ENCODE measurements at regions of chr2 and their contacts with region 1.

Region 1: DNA sequence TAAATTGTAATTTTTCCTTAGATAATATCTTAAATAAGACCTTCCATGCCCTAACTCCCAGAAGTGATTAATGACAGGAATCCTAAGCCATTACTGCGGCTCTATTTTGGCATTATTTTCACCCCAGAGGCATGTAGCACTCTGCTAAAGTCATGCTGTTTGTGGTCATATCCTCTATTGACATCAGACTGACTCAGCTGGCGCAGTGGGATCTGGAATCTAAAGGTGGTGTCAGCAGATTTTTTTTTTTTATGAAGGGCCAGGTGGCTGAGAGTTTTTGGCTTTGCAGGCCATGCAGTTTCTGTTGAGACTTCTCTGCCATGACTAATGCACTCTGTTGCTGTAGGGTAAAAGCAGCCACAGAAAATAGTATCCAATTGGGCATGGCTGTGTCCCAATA is 64.1 kb upstream of the ACVR1C start:
- DNase-seq: no peak
- H3K4me3 ChIP-seq: no peak overlapping the region
- H3K27ac ChIP-seq: no peak overlapping the region
- H3K4me1 ChIP-seq: no peaks in the 10 kb centered on the region
- H3K27me3 ChIP-seq: no peaks in the 10 kb centered on the region
- CTCF ChIP-seq: no peak
- POLR2A ChIP-seq: no peak

Region 2: DNA sequence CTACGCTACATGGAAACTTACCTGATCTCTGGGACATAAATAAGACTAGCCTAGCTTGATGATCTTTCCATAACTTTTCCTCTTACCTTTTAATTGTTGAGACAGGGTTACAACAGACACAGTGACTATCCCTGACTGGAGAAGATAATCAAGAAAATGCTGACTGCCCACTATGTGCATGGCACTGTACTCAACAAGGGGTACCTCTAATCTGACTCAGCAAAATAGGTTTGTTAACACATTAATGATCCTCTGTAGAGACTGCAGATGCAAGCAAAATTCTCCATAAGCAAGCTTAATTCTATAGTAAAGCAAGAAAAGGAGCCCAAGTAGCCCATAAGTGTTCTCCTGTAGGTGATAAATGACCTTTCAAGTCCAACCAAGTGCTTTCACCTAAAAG is 89.6 kb before region 1 on chr2:
- intact Hi-C with region 1: no loop called
- DNase-seq: no peak
- H3K4me3 ChIP-seq: no peak overlapping the region
- H3K27ac ChIP-seq: no peak overlapping the region
- H3K4me1 ChIP-seq: no peaks in the 10 kb centered on the region
- H3K27me3 ChIP-seq: no peaks in the 10 kb centered on the region
- CTCF ChIP-seq: no peak
- POLR2A ChIP-seq: no peak

Region 3: GRCh38 chr2:157722580-157723234 is 29.9 kb after region 1 on chr2:
- intact Hi-C with region 1: loop called (anchors 1 kb)
- DNase-seq: no peak
- H3K4me3 ChIP-seq: no peak overlapping the region
- H3K27ac ChIP-seq: no peak overlapping the region
- H3K4me1 ChIP-seq: no peaks in the 10 kb centered on the region
- H3K27me3 ChIP-seq: no peaks in the 10 kb centered on the region
- CTCF ChIP-seq: no peak
- POLR2A ChIP-seq: no peak